ENCODE measurements at regions of chr2 and their contacts with region 1.

Region 1: DNA sequence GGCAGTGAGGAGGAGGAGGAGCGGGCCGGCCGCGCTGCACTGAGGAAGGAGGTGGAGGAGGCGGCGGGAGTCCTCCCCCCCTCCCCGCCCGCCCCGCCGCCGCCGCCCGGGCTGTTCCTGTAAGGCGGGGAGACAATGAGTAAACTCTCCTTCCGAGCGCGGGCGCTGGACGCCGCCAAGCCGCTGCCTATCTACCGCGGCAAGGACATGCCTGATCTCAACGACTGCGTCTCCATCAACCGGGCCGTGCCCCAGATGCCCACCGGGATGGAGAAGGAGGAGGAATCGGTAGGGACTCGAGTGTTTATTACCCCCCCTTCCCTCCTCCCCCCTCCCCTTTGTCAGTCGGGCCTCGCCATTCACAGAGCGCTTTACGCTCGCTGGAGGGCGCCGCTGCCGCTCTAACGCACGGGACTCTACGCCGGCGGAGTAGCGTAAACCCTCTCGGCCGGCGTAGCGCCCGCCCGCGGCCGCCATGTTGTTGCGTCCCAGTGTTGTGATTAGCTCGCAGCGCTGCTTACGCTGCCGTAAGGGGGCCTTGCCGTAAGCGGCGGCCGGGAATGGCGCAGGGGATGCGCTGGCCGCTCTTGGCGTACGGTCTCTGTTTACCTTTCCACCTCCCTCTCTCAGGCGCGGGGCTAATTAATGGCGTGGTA is 460 bp downstream of the EPC2 start:
- DNase-seq: peak; percentile 89
- H3K4me3 Mint-ChIP-seq: peak overlapping the region; percentile 95
- H3K27ac Mint-ChIP-seq: peak overlapping the region; percentile 81
- H3K4me1 Mint-ChIP-seq: peaks cover 33% of the 10 kb centered on the region
- H3K27me3 Mint-ChIP-seq: peaks cover 6% of the 10 kb centered on the region

Region 2: GRCh38 chr2:148020111-148021058 is 624.6 kb before region 1 on chr2 and contains the start of gene ORC4:
- intact Hi-C with region 1: loop called (anchors 1 kb)
- DNase-seq: peak; percentile 94
- H3K4me3 Mint-ChIP-seq: peak within 1 kb of the TSS; percentile 100
- H3K27ac Mint-ChIP-seq: peak within 1 kb of the TSS; percentile 93
- H3K4me1 Mint-ChIP-seq: peaks cover 44% of the 10 kb centered on the region
- H3K27me3 Mint-ChIP-seq: no peaks in the 10 kb centered on the region
- total RNA-seq, gene ORC4: 25.4 and 31.2 TPM in 2 replicates

Region 3: GRCh38 chr2:148483666-148484065 is 161.3 kb before region 1 on chr2:
- intact Hi-C with region 1: no loop called
- DNase-seq: no peak
- H3K4me3 Mint-ChIP-seq: no peak overlapping the region
- H3K27ac Mint-ChIP-seq: no peak overlapping the region
- H3K4me1 Mint-ChIP-seq: peaks cover 2% of the 10 kb centered on the region
- H3K27me3 Mint-ChIP-seq: peaks cover 11% of the 10 kb centered on the region

Region 4: GRCh38 chr2:148540022-148540421 is 105.0 kb before region 1 on chr2:
- intact Hi-C with region 1: loop called (anchors 5 kb)
- DNase-seq: no peak
- H3K4me3 Mint-ChIP-seq: peak overlapping the region; percentile 13
- H3K27ac Mint-ChIP-seq: peak overlapping the region; percentile 53
- H3K4me1 Mint-ChIP-seq: peaks cover 29% of the 10 kb centered on the region
- H3K27me3 Mint-ChIP-seq: no peaks in the 10 kb centered on the region

Region 5: DNA sequence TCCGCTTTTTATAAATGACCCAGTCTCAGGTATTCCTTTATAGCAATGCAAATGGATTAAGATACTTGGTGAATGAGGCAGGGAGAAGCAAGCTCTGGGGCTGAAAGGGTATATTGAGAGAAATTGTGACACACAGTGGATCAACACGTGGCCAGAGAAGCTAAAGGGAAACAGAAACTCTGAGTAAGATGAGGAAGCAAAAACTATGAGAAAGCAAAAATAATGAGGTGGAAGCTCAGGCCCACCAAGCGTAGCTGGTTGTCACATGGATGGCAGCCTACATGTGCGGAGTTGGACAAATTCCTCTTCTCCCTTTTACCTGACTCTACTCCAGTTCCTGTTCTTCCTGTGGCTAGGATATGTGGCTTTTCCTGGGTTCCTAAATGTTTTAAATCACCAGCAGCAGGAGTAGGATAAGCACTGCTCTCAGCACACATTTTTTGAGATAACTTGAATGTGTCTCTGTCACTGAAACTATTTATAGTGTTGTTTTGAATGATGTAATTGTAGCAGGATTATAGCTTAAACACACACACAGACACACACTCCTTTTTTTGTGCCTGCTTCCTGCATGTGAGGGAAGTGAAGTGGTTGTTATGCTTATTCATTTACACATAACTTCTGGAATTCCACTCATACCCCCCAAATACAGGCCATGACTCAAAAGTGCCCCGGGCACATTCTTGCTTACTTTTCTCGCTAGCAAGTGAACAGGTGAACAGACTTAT is 30.5 kb before region 1 on chr2:
- intact Hi-C with region 1: loop called (anchors 1 kb)
- DNase-seq: no peak
- H3K4me3 Mint-ChIP-seq: no peak overlapping the region
- H3K27ac Mint-ChIP-seq: peak overlapping the region; percentile 67
- H3K4me1 Mint-ChIP-seq: peaks cover 14% of the 10 kb centered on the region
- H3K27me3 Mint-ChIP-seq: no peaks in the 10 kb centered on the region

Region 6: GRCh38 chr2:148667113-148667836 is 22.3 kb after region 1 on chr2:
- intact Hi-C with region 1: no loop called
- DNase-seq: no peak
- H3K4me3 Mint-ChIP-seq: no peak overlapping the region
- H3K27ac Mint-ChIP-seq: peak overlapping the region; percentile 40
- H3K4me1 Mint-ChIP-seq: peaks cover 40% of the 10 kb centered on the region
- H3K27me3 Mint-ChIP-seq: no peaks in the 10 kb centered on the region

Region 7: DNA sequence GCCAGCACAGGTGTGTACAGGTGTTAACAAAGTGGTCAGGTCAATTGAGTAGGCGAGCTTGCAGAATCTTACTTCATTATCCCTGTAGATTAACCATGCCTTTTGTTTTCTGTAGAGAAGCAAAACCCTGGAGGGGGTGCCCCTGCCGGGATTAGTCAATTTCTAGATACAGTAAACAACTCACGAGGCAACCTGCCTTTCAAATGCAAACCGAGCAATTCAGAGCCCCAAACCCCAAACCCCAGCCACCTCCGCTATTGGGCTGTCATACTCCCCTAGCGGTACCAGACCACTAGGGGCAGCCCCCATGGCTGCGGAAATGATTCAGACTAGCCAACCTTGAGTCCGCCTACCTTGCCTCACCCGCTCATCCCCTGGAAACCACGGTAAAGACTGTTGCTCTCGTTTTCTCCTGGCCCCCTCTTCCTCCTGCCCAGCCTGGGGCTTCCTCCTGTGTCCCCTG is 168.6 kb after region 1 on chr2:
- intact Hi-C with region 1: loop called (anchors 1 kb)
- DNase-seq: peak; percentile 41
- H3K4me3 Mint-ChIP-seq: no peak overlapping the region
- H3K27ac Mint-ChIP-seq: peak overlapping the region; percentile 8
- H3K4me1 Mint-ChIP-seq: peaks cover 20% of the 10 kb centered on the region
- H3K27me3 Mint-ChIP-seq: peaks cover 16% of the 10 kb centered on the region

Region 8: DNA sequence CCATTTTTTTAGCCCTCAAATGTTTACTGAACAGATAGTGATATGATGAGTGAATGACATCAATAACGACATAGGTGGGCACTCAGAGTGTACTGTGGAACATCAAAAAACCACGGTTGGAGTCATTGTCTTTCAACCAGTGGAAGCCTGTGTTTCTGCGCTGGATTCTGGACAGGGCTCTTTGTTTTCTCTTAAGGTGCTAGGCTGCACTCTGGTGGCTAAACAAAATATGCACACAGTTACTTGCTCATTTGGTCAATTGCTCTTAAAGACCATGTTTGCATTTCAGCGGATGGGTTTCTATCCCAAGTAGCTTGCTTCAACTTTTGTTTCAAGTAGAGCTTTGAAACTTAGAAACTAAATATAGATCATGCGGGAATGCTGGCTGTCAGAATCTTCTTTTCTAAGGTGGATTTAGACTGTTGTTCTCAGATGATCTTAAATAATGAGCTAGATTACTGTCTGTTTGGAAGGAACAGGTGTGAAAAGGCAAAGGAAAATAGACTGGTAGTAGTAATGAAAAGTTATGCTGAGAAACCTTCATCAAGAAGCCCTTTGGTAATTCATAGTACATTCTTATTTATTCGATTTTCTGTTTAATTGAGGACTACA is 345.0 kb after region 1 on chr2:
- intact Hi-C with region 1: loop called (anchors 10 kb)
- DNase-seq: peak; percentile 26
- H3K4me3 Mint-ChIP-seq: no peak overlapping the region
- H3K27ac Mint-ChIP-seq: no peak overlapping the region
- H3K4me1 Mint-ChIP-seq: peaks cover 1% of the 10 kb centered on the region
- H3K27me3 Mint-ChIP-seq: no peaks in the 10 kb centered on the region

Measured in activated T-helper 2 cell treated with anti-CD3 and anti-CD28 coated beads, Interferon-gamma antibody, Interleukin-2, Interleukin-4, amounts not matched to agents 10 μg/mL and 5 μg/mL and 100 μg/mL, durations not matched to agents 14 hours and 24 hours and 36 hours (primary cell).